ENCODE measurements at regions of chr5 and their contacts with region 1.

Region 1: GRCh38 chr5:56190497-56190896 is 42.6 kb downstream of the ANKRD55 start:
- DNase-seq: peak in 1 of 2 donors; percentile 52
- ATAC-seq: peak in 6 of 8 donors; percentile 20 to 73 (median 61)
- H3K4me3 ChIP-seq: no peak overlapping the region
- H3K27ac ChIP-seq: peak overlapping the region in 2 of 10 donors; percentile 29 to 37
- H3K4me1 ChIP-seq: peaks cover 0 to 27% (median 4%) of the 10 kb centered on the region in 9 donors
- H3K27me3 ChIP-seq: no peaks in the 10 kb centered on the region
- CTCF ChIP-seq: no peak

Region 2: GRCh38 chr5:55988979-55989638 is 201.4 kb before region 1 on chr5:
- intact Hi-C with region 1: loop called in 2 of 10 experiments (anchors 5 kb)
- DNase-seq: no peak
- ATAC-seq: no peak
- H3K4me3 ChIP-seq: no peak overlapping the region
- H3K27ac ChIP-seq: peak overlapping the region in 1 of 10 donors; percentile 3
- H3K4me1 ChIP-seq: peaks cover 0 to 81% (median 54%) of the 10 kb centered on the region in 9 donors
- H3K27me3 ChIP-seq: no peaks in the 10 kb centered on the region
- CTCF ChIP-seq: no peak

Measured in heart right ventricle (tissue), 16 donors.